B cell (primary cell): ENCODE measurements at regions of chr11 and their contacts with region 1.

Region 1: DNA sequence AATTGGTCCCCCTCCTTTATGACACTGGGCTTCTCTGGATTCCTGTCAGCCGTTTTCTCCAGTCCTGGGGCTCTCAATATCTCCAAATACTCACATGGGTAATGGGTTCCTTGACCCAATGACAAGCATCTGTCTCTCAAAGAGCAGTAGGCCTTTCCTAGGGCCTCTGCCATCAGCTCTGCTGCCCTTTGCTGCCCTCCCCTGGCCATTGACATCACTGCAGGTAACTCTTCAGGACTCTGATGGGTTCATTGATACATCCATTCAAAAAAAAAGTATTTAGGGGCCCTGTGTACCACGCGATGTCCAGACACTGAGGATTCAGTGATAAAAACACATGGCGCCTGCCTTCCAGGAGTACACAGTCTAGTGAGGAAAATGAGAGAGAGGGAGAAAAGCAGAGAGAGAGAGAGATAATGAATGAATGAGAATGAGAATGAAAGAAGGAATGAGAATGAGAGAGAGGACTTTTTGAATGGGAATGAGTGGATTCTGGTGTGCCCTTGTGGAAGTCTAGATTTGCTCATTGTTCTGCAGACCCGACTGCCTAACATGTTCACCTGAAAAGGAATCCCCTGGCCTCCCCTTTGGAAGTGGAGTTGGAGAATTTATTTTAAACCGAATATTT is 42.6 kb upstream of the OLFML1 start:
- DNase-seq: peak; percentile 76
- ATAC-seq: peak; percentile 96
- H3K4me3 ChIP-seq: no peak overlapping the region
- H3K4me3 Mint-ChIP-seq: no peak overlapping the region
- H3K27ac ChIP-seq: no peak overlapping the region
- H3K27ac Mint-ChIP-seq: no peak overlapping the region
- H3K4me1 ChIP-seq: no peaks in the 10 kb centered on the region
- H3K4me1 Mint-ChIP-seq: peaks cover 2% of the 10 kb centered on the region
- H3K27me3 ChIP-seq: no peaks in the 10 kb centered on the region
- H3K27me3 Mint-ChIP-seq: no peaks in the 10 kb centered on the region
- CTCF ChIP-seq: peak; percentile 94

Region 2: DNA sequence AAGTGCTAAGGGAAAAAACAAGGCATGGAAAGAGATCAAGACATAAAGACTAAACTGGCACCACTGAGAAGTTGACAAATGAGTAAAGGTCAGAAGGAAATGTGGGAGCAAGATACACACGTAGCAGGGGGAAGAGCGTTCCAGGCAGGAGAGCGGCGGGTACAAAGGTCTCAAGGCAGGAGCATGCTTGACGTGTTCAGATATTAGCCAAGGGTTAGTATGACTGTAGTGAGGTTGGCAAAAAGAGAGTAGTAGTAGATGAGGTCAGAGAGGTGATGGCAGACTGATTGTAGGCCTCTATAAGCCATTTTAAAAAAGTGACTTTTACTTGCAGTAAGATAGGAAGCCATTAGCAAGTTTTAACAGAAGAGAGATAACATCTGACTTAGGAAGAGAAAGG is 181.1 kb before region 1 on chr11:
- CTCF ChIA-PET with region 1: no interaction called
- POLR2A ChIA-PET with region 1: no interaction called
- intact Hi-C with region 1: no loop called
- DNase-seq: no peak
- ATAC-seq: no peak
- H3K4me3 ChIP-seq: no peak overlapping the region
- H3K4me3 Mint-ChIP-seq: no peak overlapping the region
- H3K27ac ChIP-seq: no peak overlapping the region
- H3K27ac Mint-ChIP-seq: no peak overlapping the region
- H3K4me1 ChIP-seq: no peaks in the 10 kb centered on the region
- H3K4me1 Mint-ChIP-seq: no peaks in the 10 kb centered on the region
- H3K27me3 ChIP-seq: peaks cover 0 to 11% (median 2%) of the 10 kb centered on the region in 4 experiments
- H3K27me3 Mint-ChIP-seq: peaks cover 19% of the 10 kb centered on the region
- CTCF ChIP-seq: no peak

Region 3: DNA sequence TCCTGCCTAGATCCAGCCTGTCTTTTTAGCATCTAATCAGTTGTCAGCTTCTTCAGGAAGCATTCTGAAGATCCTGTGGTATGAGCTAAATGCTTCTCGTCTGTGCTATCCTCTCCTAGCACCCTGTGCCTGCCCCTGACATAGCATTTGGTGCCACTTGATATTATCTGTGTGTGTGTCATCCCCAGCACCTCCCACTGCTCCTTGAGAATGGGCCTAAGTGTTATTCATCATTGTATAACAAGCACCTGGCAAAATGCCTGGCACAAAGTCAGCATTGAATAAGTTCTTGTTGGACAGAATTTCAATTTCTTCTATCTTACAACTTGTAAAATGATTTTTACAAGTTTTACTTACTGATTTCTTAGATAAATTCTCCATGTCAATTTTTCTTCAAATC is 14.5 kb after region 1 on chr11:
- CTCF ChIA-PET with region 1: interaction called, 15 read pairs
- POLR2A ChIA-PET with region 1: interaction called, 3 read pairs
- intact Hi-C with region 1: no loop called
- DNase-seq: no peak
- ATAC-seq: no peak
- H3K4me3 ChIP-seq: no peak overlapping the region
- H3K4me3 Mint-ChIP-seq: no peak overlapping the region
- H3K27ac ChIP-seq: no peak overlapping the region
- H3K27ac Mint-ChIP-seq: no peak overlapping the region
- H3K4me1 ChIP-seq: no peaks in the 10 kb centered on the region
- H3K4me1 Mint-ChIP-seq: peaks cover 3% of the 10 kb centered on the region
- H3K27me3 ChIP-seq: no peaks in the 10 kb centered on the region
- H3K27me3 Mint-ChIP-seq: no peaks in the 10 kb centered on the region
- CTCF ChIP-seq: no peak

Region 4: DNA sequence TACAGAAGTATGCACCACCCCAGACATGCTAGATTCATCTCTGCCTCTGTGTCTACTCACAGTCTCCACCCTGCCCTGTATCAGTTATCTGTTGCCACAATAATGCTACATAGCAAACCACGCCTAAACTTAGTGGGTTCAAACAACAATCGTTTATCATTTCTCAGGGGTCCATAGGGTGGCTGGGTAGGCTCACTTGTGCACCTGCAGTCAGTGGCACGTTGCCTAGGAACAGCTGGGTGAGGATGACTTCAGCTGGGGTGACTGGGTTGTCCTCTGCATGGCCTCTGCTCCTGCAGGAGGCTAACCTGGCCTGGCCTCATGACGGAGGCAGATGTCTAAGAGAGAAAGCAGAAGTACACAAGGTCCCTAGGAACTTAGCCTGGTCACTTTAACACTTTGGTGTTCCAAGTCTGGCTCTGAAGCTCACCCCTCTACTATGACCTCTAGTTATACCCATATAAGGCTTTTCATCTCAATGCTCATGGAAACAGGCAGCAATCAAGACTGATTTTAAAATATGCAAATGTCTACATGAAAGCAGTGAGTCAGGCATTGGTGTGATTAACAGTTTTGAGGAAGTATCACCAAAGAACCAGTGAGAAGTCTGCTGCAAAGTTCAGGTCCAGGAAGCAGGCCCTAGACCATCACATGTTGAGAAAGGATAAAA is 53.3 kb after region 1 on chr11:
- CTCF ChIA-PET with region 1: interaction called, 7 read pairs
- POLR2A ChIA-PET with region 1: no interaction called
- intact Hi-C with region 1: loop called (anchors 5 kb)
- DNase-seq: peak; percentile 82
- ATAC-seq: peak; percentile 83
- H3K4me3 ChIP-seq: no peak overlapping the region
- H3K4me3 Mint-ChIP-seq: peak overlapping the region; percentile 76
- H3K27ac ChIP-seq: peak overlapping the region; percentile 79 to 90
- H3K27ac Mint-ChIP-seq: peak overlapping the region; percentile 94
- H3K4me1 ChIP-seq: peaks cover 67 to 73% of the 10 kb centered on the region in 2 donors
- H3K4me1 Mint-ChIP-seq: peaks cover 66% of the 10 kb centered on the region
- H3K27me3 ChIP-seq: no peaks in the 10 kb centered on the region
- H3K27me3 Mint-ChIP-seq: no peaks in the 10 kb centered on the region
- CTCF ChIP-seq: no peak

Region 5: DNA sequence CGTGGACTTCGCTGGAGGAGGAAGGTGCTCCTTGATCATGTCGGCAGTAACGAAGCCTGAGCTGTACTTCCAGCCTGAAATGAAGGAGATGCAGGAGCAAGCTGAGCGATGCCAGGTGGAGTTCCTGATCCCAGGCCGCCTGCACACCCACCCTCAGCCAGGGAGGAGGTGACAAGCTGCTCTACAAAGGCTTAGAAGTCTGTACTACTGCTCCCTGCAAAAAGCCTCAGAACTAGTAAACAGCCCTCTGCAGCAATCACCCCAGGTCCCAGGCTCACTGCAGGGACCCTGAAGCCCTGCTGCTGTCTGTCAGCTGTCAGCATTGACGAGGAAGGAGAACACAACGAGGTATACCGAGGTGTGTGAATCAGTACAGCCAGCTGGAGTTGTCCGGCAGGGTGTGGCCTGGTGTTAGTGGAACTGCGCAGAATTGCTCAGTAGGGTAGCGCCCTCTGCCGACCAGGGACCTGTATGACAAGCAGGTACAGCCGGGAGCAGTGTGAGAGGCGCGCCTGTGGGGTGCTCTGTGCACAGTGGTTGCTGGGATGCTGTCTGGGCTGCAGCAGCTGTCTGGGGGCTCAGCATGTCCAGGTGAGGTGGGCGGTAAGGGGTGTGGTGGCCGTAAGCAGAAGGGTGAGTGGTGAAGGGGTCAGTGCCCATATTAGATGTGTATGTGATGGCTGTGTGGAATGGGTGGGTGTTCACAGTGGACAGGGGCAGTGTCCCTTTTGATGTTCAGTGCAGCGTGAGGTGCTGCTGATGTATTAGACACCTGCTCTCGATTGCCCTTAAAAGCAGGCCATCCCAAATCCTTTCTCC is 223.0 kb after region 1 on chr11:
- CTCF ChIA-PET with region 1: interaction called, 18 read pairs
- POLR2A ChIA-PET with region 1: no interaction called
- intact Hi-C with region 1: loop called (anchors 2 kb)
- DNase-seq: peak; percentile 81
- ATAC-seq: peak; percentile 100
- H3K4me3 ChIP-seq: no peak overlapping the region
- H3K4me3 Mint-ChIP-seq: no peak overlapping the region
- H3K27ac ChIP-seq: no peak overlapping the region
- H3K27ac Mint-ChIP-seq: no peak overlapping the region
- H3K4me1 ChIP-seq: peaks cover 0 to 8% of the 10 kb centered on the region in 2 donors
- H3K4me1 Mint-ChIP-seq: peaks cover 4% of the 10 kb centered on the region
- H3K27me3 ChIP-seq: no peaks in the 10 kb centered on the region
- H3K27me3 Mint-ChIP-seq: no peaks in the 10 kb centered on the region
- CTCF ChIP-seq: peak; percentile 94

Region 6: DNA sequence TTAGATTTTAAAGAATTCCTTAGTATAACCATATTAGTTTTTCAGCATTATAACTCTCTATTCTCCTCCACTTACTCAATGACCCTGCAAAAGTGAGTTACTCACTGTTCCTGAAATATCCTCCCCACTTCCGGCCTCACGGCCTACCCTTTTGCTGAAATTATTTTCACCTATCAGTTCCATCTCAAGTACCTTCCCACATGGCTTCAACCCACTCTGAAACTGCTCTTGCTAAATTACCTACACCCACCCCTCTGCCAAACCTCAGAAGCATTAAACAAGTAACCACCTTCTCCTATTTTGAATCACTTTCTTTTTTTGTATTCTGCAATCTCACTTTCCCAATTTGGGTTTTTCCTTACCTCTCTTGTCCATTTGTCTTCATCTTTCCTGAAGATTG is 316.3 kb after region 1 on chr11:
- CTCF ChIA-PET with region 1: no interaction called
- POLR2A ChIA-PET with region 1: no interaction called
- intact Hi-C with region 1: no loop called
- DNase-seq: no peak
- ATAC-seq: no peak
- H3K4me3 ChIP-seq: no peak overlapping the region
- H3K4me3 Mint-ChIP-seq: no peak overlapping the region
- H3K27ac ChIP-seq: no peak overlapping the region
- H3K27ac Mint-ChIP-seq: no peak overlapping the region
- H3K4me1 ChIP-seq: no peaks in the 10 kb centered on the region
- H3K4me1 Mint-ChIP-seq: no peaks in the 10 kb centered on the region
- H3K27me3 ChIP-seq: no peaks in the 10 kb centered on the region
- H3K27me3 Mint-ChIP-seq: peaks cover 8% of the 10 kb centered on the region
- CTCF ChIP-seq: no peak